ENCODE measurements at regions of chr9 and their contacts with region 1.

Region 1: DNA sequence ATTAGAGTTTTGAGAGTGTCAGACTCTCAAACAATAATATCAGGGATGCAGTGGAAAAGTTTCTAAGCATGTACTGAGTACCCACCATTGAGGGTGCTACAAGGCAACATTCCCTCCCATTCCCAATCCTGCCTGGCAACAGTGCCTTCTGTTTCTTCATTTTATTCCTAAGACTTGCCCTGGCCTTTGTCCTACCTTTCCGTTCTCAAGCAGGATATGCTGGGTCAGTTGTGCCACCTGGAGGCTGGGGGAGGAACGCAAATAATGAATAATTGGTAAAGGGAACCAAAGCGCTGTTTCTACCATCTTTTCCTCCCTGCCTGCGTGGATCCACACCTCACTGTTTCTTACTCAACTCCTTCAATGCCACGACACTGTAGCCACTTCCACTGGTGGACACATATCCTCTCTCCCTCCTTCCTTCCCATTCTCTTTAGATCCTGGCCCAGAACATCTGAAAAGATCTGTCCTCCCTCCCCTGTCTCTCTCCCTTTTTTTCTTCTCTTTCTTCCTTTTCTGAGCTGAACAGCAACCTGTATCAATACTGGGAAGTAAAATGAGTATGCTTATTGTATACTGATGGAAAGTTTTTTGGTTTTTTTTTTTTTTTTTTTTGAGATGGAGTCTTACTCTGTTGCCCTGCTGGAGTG is 149.5 kb downstream of the C9orf152 start:
- DNase-seq: peak; percentile 66
- H3K4me3 ChIP-seq: no peak overlapping the region
- H3K27ac ChIP-seq: no peak overlapping the region
- H3K4me1 ChIP-seq: peaks cover 0 to 3% (median 0%) of the 10 kb centered on the region in 4 donors
- H3K27me3 ChIP-seq: no peaks in the 10 kb centered on the region
- CTCF ChIP-seq: peak; percentile 38 to 84 (median 57)
- EP300 ChIP-seq: no peak
- POLR2A ChIP-seq: no peak

Region 2: GRCh38 chr9:110152704-110153374 is 94.4 kb after region 1 on chr9:
- in situ Hi-C with region 1: loop called in 3 of 4 experiments (anchors 10 to 25 kb)
- intact Hi-C with region 1: no loop called
- DNase-seq: no peak
- H3K4me3 ChIP-seq: no peak overlapping the region
- H3K27ac ChIP-seq: peak overlapping the region in 2 of 4 donors; percentile 2 to 22
- H3K4me1 ChIP-seq: peaks cover 17 to 59% (median 30%) of the 10 kb centered on the region in 4 donors
- H3K27me3 ChIP-seq: no peaks in the 10 kb centered on the region
- CTCF ChIP-seq: peak; percentile 66 to 81 (median 69)
- EP300 ChIP-seq: no peak
- POLR2A ChIP-seq: no peak